HEK293 (cell line): ENCODE measurements at regions of chr16 and their contacts with region 1.

Region 1: DNA sequence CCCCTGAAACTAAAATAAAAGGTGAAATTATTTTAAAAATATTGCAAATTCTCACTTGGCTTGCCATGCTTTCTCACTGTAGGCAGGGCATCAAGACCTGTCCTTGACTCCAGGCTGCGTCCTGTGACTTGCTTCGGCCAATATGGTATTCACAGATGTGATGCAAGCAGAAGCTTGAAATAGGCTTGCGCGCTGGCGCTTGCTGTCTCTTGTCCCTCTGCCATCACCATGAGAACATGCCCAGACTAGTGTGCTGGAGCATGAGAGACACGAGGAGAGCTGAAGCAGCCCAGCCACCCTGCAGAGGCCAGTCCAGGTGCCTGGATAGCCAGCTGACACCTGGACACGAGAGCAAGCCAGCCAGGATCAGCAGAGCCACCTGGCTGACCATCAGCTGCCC is 21.8 kb upstream of the ZKSCAN2 start:
- H3K4me3 ChIP-seq: no peak overlapping the region
- H3K27ac ChIP-seq: no peak overlapping the region
- H3K4me1 ChIP-seq: no peaks in the 10 kb centered on the region
- CTCF ChIP-seq: no peak

Region 2: DNA sequence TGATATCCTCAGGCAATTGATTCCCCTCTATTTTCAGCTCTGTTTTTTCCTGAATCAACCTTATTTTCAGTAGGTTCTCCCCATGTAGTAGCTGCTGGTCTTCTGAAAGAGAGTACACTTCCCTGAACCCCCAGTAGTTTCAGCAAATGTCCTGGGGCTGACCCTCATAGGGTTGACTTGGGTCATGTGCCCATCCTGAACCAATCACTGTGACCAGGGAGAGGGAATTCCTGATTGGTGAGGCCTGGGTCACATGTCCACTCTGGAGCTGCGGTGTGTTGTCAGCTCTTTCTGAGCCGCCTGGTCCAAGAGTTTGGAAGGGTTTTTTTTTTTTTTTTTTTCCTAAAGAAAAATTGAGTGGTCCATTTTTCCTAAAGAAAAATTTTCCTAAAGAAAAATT is 13.5 kb before region 1 on chr16:
- CTCF ChIA-PET with region 1: interaction called, 16 read pairs
- POLR2A ChIA-PET with region 1: no interaction called
- H3K4me3 ChIP-seq: no peak overlapping the region
- H3K27ac ChIP-seq: no peak overlapping the region
- H3K4me1 ChIP-seq: no peaks in the 10 kb centered on the region
- CTCF ChIP-seq: no peak